Right ventricle myocardium superior (tissue), 1 donor: ENCODE measurements at regions of chr2 and their contacts with region 1.

Region 1: GRCh38 chr2:181715033-181715630 is 34.8 kb upstream of the NEUROD1 start:
- DNase-seq: peak; percentile 46
- ATAC-seq: peak; percentile 77

Region 2: DNA sequence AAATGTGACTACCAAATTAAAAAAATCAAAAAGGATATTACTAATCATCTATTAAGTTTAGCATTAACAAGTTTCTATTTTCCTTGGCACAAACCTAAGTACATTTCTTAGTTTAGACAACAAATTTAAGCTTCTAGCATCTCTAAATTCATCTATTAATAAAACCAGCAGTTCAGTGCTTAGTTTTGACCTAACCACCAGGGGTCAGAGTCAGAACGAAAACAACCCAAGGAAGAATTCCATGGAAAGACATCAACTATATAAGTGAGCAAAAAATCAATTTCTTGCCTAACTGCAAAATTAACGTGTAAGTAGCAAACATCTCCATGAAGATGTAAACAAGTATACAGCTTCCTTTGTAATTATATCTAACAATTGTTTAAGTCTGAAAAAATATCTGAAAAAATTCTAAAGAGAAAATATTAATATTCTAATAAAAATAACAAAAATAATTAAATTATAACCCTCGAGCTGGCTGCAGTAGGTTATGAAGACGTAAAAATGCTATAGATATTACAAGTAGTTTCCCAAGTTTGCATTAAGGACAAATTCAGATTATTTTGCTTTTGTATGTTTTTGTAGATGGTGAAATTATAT is 141.9 kb before region 1 on chr2:
- intact Hi-C with region 1: loop called (anchors 5 kb)
- DNase-seq: no peak
- ATAC-seq: no peak